Dendritic cell treated with granulocyte-macrophage colony-stimulating factor and Interleukin-4, amounts not matched to agents 40 ng/mL and 50 ng/mL, for 4 days (primary cell): ENCODE measurements at regions of chr3 and their contacts with region 1.

Region 1: DNA sequence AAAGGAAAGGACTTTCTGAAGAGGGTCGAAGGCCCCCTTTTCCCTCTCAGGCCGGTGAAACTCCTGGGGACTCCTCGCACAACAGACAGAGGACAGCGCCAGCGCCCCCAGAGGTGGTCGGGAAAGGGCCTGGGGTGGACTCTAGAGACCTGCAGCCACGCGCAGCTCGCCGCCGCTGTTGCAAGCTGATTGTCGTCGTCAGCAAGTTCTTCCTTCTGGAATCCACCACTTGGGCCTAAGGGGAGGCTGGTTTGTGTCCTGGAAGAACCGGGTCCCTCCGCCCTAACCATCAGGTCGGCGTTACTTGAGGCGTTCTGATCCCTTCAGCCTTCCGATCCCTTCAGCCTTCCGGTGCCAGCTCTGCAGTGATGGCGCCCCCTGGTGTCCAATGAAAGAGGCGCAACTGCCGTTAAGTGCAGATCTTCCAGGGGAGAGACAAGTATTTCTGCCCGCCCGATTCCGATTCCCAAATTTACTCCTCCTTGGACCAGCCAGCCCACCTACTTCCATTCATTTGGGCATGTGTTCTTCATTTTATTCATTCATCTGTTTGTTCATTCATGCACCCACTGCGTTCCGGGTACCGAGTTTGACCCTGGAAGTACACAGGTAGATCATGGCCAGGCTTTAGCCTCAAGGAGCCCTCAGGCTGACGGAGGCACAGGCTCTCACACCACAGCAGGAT is 77.2 kb upstream of the SLC6A11 start:
- H3K4me3 Mint-ChIP-seq: peak overlapping the region; percentile 21
- H3K27ac Mint-ChIP-seq: no peak overlapping the region
- H3K4me1 Mint-ChIP-seq: peaks cover 7% of the 10 kb centered on the region
- H3K27me3 Mint-ChIP-seq: peaks cover 38% of the 10 kb centered on the region

Region 2: DNA sequence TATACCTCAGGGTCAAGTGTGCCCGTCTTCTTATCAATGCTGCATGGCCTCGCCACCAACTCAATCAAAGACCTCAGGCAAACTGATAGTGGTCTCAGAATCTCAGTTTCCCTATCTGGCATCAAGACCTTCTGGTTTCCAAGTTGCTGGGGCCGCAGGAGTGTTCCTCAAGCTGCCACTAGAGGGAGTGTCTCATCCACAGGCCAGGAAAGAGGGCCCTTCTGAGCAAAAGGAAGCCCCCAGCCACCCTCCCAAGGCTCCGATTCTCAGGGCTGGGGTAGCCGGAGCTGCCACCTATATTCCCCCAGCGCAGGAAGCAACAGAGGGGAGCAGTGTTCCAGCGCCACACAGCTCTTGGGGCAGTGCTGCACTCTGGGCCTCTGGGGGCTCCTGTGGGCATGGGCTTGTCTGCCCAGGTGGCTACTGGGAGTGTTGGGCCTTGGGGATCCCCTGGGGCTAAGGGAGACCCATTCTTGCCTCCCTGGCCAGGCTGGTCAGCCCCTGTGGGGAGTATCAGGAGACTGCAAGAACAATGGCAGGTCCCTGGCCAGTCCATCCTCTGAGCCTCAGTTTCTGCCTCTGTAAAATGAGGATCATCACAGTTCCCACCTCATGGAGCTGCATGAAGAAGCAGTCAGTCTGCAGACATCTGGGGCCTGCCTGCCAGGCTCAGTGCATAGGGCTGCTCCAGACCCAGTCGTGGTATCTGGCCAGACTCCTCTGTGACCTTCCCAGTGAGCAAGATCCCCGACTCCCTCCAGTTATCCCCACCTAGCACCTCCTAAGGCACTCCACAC is 394.5 kb before region 1 on chr3:
- intact Hi-C with region 1: loop called (anchors 1 kb)
- H3K4me3 Mint-ChIP-seq: no peak overlapping the region
- H3K27ac Mint-ChIP-seq: peak overlapping the region; percentile 8
- H3K4me1 Mint-ChIP-seq: no peaks in the 10 kb centered on the region
- H3K27me3 Mint-ChIP-seq: peaks cover 4% of the 10 kb centered on the region

Region 3: GRCh38 chr3:10417849-10418248 is 321.0 kb before region 1 on chr3:
- intact Hi-C with region 1: loop called (anchors 2 kb)
- H3K4me3 Mint-ChIP-seq: no peak overlapping the region
- H3K27ac Mint-ChIP-seq: no peak overlapping the region
- H3K4me1 Mint-ChIP-seq: peaks cover 5% of the 10 kb centered on the region
- H3K27me3 Mint-ChIP-seq: peaks cover 34% of the 10 kb centered on the region